ENCODE measurements at regions of chr13 and their contacts with region 1.

Region 1: DNA sequence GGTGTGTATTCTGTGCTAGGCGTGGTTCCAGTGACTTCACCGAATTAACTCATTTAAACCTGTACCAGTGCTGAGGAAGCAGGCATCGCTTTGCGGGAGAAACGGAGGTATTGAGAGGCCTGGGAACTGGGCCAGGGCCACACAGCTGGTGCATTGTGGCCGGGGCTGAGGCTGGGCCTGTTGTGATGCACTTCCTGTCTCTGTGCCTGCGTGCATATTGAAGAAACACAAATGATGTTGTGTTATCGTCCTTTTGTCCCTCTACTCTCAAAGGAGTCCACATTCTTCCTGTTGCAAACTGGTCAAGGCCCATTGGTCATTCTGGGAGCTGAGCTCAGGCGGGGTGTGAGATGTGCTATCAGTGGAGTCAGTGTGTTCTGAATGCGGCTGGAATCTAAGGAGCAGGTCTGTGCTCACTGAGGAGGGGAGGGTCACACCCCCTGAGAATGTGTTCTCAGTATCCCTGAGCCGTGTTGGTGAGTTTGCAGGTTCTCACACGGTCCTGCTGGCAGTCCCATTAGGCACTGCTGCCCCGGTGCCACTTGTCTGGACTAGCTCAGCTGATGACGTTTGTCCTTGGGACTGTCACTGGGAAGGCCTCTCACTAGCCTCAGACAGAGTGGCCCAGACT is 62.1 kb downstream of the ARHGEF7 start:
- DNase-seq: peak; percentile 43 to 81 (median 74)
- H3K4me3 ChIP-seq: peak overlapping the region in 34 of 59 donors; percentile 1 to 35 (median 16)
- H3K27ac ChIP-seq: peak overlapping the region; percentile 65 to 95 (median 87)
- H3K27me3 ChIP-seq: no peaks in the 10 kb centered on the region
- CTCF ChIP-seq: peak in 1 of 56 donors; percentile 15

Region 2: GRCh38 chr13:111046590-111047141 is 130.5 kb before region 1 on chr13:
- intact Hi-C with region 1: no loop called
- DNase-seq: no peak
- H3K4me3 ChIP-seq: no peak overlapping the region
- H3K27ac ChIP-seq: peak overlapping the region in 7 of 59 donors; percentile 11 to 42 (median 28)
- H3K27me3 ChIP-seq: no peaks in the 10 kb centered on the region
- CTCF ChIP-seq: peak in 10 of 56 donors; percentile 8 to 20 (median 14)

Region 3: GRCh38 chr13:111210544-111211469 is 33.6 kb after region 1 on chr13:
- intact Hi-C with region 1: loop called in 1 of 2 experiments (anchors 5 kb)
- DNase-seq: peak in 9 of 10 donors; percentile 68 to 85 (median 80)
- H3K4me3 ChIP-seq: peak overlapping the region; percentile 11 to 81 (median 53)
- H3K27ac ChIP-seq: peak overlapping the region in 58 of 59 donors; percentile 23 to 94 (median 85)
- H3K27me3 ChIP-seq: no peaks in the 10 kb centered on the region
- CTCF ChIP-seq: peak in 5 of 56 donors; percentile 16 to 38 (median 22)

Measured in dorsolateral prefrontal cortex (tissue), 120 donors.